IMR-90 (cell line): ENCODE measurements at regions of chr22 and their contacts with region 1.

Region 1: GRCh38 chr22:32985899-32986765 is 72.0 kb downstream of the SYN3 start:
- DNase-seq: peak; percentile 71
- ATAC-seq: peak; percentile 100
- H3K4me3 ChIP-seq: no peak overlapping the region
- H3K27ac ChIP-seq: no peak overlapping the region
- H3K4me1 ChIP-seq: no peaks in the 10 kb centered on the region
- H3K27me3 ChIP-seq: peaks cover 3% of the 10 kb centered on the region
- CTCF ChIP-seq: peak; percentile 86
- POLR2A ChIP-seq: no peak
- RAD21 ChIP-seq: peak; percentile 90

Region 2: GRCh38 chr22:32411829-32412592 is 574.1 kb before region 1 on chr22 and contains the start of gene RTCB:
- CTCF ChIA-PET with region 1: no interaction called
- POLR2A ChIA-PET with region 1: no interaction called
- dilution Hi-C with region 1: no loop called
- in situ Hi-C with region 1: no loop called
- intact Hi-C with region 1: loop called (anchors 5 kb)
- DNase-seq: peak; percentile 93
- ATAC-seq: peak; percentile 94
- H3K4me3 ChIP-seq: peak within 1 kb of the TSS; percentile 78
- H3K27ac ChIP-seq: peak within 1 kb of the TSS; percentile 57
- H3K4me1 ChIP-seq: peaks cover 2% of the 10 kb centered on the region; the same call in 1 of the 2 replicates
- H3K27me3 ChIP-seq: no peaks in the 10 kb centered on the region; the same call in none of the 2 replicates
- CTCF ChIP-seq: no peak
- POLR2A ChIP-seq: peak; percentile 48; the same call in 1 of the 2 replicates
- RAD21 ChIP-seq: no peak
- total RNA-seq, gene RTCB: 213 and 240 TPM in 2 replicates

Region 3: GRCh38 chr22:32528984-32529982 is 456.8 kb before region 1 on chr22:
- CTCF ChIA-PET with region 1: interaction called, 9 read pairs
- POLR2A ChIA-PET with region 1: no interaction called
- dilution Hi-C with region 1: no loop called
- in situ Hi-C with region 1: loop called (anchors 5 kb)
- intact Hi-C with region 1: loop called (anchors 1 kb)
- DNase-seq: peak; percentile 86
- ATAC-seq: peak; percentile 78
- H3K4me3 ChIP-seq: no peak overlapping the region
- H3K27ac ChIP-seq: peak overlapping the region; percentile 1; the same call in 1 of the 2 replicates
- H3K4me1 ChIP-seq: peaks cover 23% of the 10 kb centered on the region
- H3K27me3 ChIP-seq: no peaks in the 10 kb centered on the region
- CTCF ChIP-seq: peak; percentile 95
- POLR2A ChIP-seq: peak; percentile 67
- RAD21 ChIP-seq: peak; percentile 100

Region 4: DNA sequence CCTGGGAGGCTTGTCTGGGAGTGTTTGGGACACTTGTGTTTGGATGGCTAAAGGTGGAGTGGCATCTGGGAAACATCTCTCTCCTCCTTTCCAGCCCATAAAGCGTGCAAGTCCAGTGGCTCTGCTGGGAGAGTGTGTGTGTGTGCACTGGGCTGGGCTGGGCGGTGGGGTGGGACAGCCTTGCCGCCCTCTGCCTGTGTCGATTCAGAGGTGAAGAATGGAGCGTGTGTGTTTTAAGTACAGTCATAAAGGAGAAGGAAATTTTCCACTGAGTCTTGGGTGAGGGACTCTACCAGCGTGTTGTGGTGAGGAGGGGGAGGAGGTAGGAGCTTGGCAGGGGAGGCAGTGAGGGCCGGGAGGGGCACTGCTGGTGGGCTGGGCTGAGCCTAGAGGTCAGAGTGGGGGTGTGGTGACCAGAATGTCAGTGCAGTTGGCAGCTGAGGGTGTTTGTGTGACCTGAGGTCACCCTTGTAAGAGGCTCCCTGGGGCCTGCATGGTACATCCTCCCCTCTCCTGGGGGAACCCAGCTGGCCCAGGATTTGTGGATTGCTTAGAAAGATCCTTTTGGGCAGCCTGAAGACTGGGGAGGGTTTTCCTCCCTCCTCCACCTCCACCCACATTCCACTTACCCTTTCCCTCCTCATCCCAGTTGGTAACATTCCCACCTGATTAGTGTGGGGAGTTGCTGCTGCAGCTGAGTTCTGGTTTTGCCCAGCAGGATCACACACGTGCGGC is 182.9 kb before region 1 on chr22:
- CTCF ChIA-PET with region 1: interaction called, 7 read pairs
- POLR2A ChIA-PET with region 1: no interaction called
- dilution Hi-C with region 1: no loop called
- in situ Hi-C with region 1: no loop called
- intact Hi-C with region 1: loop called (anchors 1 kb)
- DNase-seq: peak; percentile 70
- ATAC-seq: peak; percentile 27
- H3K4me3 ChIP-seq: peak overlapping the region; percentile 75
- H3K27ac ChIP-seq: peak overlapping the region; percentile 56
- H3K4me1 ChIP-seq: peaks cover 16% of the 10 kb centered on the region
- H3K27me3 ChIP-seq: no peaks in the 10 kb centered on the region
- CTCF ChIP-seq: no peak
- POLR2A ChIP-seq: peak; percentile 48; the same call in 1 of the 2 replicates
- RAD21 ChIP-seq: peak; percentile 12; the same call in 1 of the 2 replicates

Region 5: GRCh38 chr22:32862936-32863661 is 123.0 kb before region 1 on chr22:
- CTCF ChIA-PET with region 1: no interaction called
- POLR2A ChIA-PET with region 1: no interaction called
- dilution Hi-C with region 1: no loop called
- in situ Hi-C with region 1: no loop called
- intact Hi-C with region 1: loop called (anchors 10 kb)
- DNase-seq: no peak
- ATAC-seq: no peak; the same call in 1 of the 2 replicates
- H3K4me3 ChIP-seq: no peak overlapping the region
- H3K27ac ChIP-seq: no peak overlapping the region
- H3K4me1 ChIP-seq: no peaks in the 10 kb centered on the region
- H3K27me3 ChIP-seq: no peaks in the 10 kb centered on the region
- CTCF ChIP-seq: no peak
- POLR2A ChIP-seq: peak; percentile 47
- RAD21 ChIP-seq: no peak

Region 6: GRCh38 chr22:32926600-32926999 is 59.5 kb before region 1 on chr22:
- CTCF ChIA-PET with region 1: interaction called, 3 read pairs
- POLR2A ChIA-PET with region 1: no interaction called
- dilution Hi-C with region 1: no loop called
- in situ Hi-C with region 1: no loop called
- intact Hi-C with region 1: loop called (anchors 2 kb)
- DNase-seq: peak; percentile 34
- ATAC-seq: peak; percentile 64
- H3K4me3 ChIP-seq: no peak overlapping the region
- H3K27ac ChIP-seq: no peak overlapping the region
- H3K4me1 ChIP-seq: no peaks in the 10 kb centered on the region
- H3K27me3 ChIP-seq: peaks cover 12% of the 10 kb centered on the region; the same call in 1 of the 2 replicates
- CTCF ChIP-seq: peak; percentile 55
- POLR2A ChIP-seq: no peak
- RAD21 ChIP-seq: 0 out of 2 replicates have a peak, but pooled peaks have one; percentile 21

Region 7: GRCh38 chr22:33221568-33221967 is 235.4 kb after region 1 on chr22:
- CTCF ChIA-PET with region 1: no interaction called
- POLR2A ChIA-PET with region 1: no interaction called
- dilution Hi-C with region 1: no loop called
- in situ Hi-C with region 1: no loop called
- intact Hi-C with region 1: no loop called
- DNase-seq: no peak
- ATAC-seq: no peak
- H3K4me3 ChIP-seq: no peak overlapping the region
- H3K27ac ChIP-seq: no peak overlapping the region
- H3K4me1 ChIP-seq: no peaks in the 10 kb centered on the region
- H3K27me3 ChIP-seq: no peaks in the 10 kb centered on the region
- CTCF ChIP-seq: no peak
- POLR2A ChIP-seq: no peak
- RAD21 ChIP-seq: no peak

Region 8: DNA sequence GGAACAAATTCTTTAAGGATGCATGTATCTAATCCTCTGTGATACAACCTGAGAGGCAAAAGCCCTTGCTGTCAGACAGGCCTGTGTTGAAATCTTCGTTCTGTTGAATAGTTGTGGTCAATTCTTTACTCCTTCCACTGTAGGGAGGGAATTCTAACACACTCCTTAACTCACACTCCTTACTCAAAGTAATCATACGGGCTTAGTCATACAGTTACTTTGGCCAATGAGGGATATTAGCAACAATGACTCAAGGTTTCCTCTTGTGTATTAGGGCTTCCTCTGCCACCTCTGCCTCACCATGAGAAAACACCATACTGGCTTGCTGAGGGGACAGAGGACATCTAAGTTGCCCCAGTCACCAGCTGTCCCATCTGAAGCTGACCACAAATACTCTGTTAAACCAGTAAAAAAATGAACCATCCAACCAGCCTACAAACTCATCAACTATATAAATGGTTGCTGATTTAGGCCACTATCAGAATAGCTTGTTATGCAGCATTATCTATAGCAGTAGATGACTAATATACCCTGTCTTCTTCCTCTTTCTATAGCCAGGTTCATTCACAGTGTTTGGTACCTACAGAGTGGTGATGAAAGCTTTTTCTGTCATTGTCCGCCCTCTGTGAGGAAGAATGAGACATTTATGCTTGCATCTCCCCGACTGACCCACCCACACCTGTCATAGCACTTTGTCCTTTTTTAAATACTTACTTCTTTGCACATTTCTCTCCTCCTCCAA is 394.8 kb after region 1 on chr22:
- CTCF ChIA-PET with region 1: no interaction called
- POLR2A ChIA-PET with region 1: no interaction called
- dilution Hi-C with region 1: no loop called
- in situ Hi-C with region 1: no loop called
- intact Hi-C with region 1: no loop called
- DNase-seq: peak; percentile 95
- ATAC-seq: peak; percentile 98
- H3K4me3 ChIP-seq: no peak overlapping the region
- H3K27ac ChIP-seq: no peak overlapping the region
- H3K4me1 ChIP-seq: no peaks in the 10 kb centered on the region
- H3K27me3 ChIP-seq: no peaks in the 10 kb centered on the region
- CTCF ChIP-seq: no peak
- POLR2A ChIP-seq: no peak
- RAD21 ChIP-seq: no peak